Heart left ventricle (tissue), 16 donors: ENCODE measurements at regions of chr3 and their contacts with region 1.

Region 1: GRCh38 chr3:30779686-30780287 is 114.7 kb downstream of the GADL1 start:
- DNase-seq: no peak
- ATAC-seq: peak in 2 of 4 donors; percentile 36 to 41
- H3K4me3 ChIP-seq: no peak overlapping the region
- H3K27ac ChIP-seq: no peak overlapping the region
- H3K4me1 ChIP-seq: no peaks in the 10 kb centered on the region
- H3K27me3 ChIP-seq: no peaks in the 10 kb centered on the region
- CTCF ChIP-seq: peak in 11 of 12 donors; percentile 11 to 53 (median 28)
- POLR2A ChIP-seq: no peak

Region 2: DNA sequence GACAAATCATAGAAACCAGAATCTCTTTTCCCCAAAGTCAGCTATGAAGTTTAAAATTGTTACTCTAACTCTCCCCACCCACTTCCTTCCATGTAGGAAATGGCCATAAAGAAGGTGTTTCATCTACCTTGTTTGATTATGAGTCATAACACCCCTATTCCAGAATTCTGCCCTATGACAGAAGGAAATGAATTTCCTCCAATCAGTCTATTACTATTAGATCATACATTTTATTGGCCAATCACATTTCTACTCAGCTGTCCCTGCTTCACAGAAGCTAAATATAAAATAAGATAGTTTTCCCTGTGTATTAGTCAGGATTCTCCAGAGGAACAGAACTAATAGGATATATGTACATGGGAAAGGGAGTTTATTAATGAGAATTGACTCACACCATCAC is 71.3 kb before region 1 on chr3:
- intact Hi-C with region 1: no loop called
- DNase-seq: no peak
- ATAC-seq: peak in 1 of 4 donors; percentile 28
- H3K4me3 ChIP-seq: no peak overlapping the region
- H3K27ac ChIP-seq: no peak overlapping the region
- H3K4me1 ChIP-seq: peaks cover 0 to 24% (median 0%) of the 10 kb centered on the region in 12 donors
- H3K27me3 ChIP-seq: no peaks in the 10 kb centered on the region
- CTCF ChIP-seq: no peak
- POLR2A ChIP-seq: no peak

Region 3: DNA sequence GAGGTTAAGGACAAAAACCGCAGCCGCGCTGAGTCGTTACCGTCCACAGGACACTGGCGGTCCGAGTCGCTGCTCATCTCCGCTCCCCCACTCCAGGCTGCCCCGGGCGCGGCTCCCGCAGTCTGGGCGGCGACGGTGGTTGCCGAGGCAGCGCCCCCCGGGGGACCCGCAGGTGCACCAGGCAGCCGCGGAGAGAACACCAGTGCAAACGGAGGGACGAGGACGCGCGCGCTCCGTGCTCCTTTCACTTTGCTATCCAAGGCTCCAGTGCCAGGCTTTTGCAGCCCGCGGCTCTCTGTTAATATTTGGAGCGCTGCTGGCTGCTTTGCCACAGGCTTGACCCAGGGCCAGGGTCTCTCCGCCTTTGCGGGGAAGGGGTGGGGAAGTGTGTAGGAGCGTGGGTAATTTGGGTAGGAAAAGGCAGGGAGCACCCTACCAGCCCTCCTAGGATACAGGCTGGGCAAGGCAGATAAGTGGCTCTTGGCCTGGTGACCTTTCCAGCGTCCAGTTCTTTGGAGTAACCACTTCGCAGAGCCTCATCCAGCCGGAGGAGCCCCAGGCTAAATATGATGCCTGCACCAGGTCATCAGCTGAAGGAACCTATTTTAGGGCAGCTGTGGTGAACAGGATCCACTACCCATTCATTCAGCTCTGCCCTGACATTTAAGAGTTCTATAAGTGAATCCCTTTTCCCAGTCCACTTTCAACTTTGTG is 114.9 kb after region 1 on chr3 and contains the start of gene GADL1:
- intact Hi-C with region 1: loop called in 2 of 10 experiments (anchors 10 kb)
- DNase-seq: peak; percentile 20 to 55 (median 33)
- ATAC-seq: peak in 3 of 4 donors; percentile 67 to 83 (median 82)
- H3K4me3 ChIP-seq: peak within 1 kb of the TSS; percentile 7 to 72 (median 58)
- H3K27ac ChIP-seq: peak within 1 kb of the TSS in 1 of 12 donors; percentile 42
- H3K4me1 ChIP-seq: peaks cover 0 to 8% (median 0%) of the 10 kb centered on the region in 12 donors
- H3K27me3 ChIP-seq: peaks cover 0 to 25% (median 0%) of the 10 kb centered on the region in 9 donors
- CTCF ChIP-seq: peak in 1 of 12 donors; percentile 24
- POLR2A ChIP-seq: no peak
- total RNA-seq, gene GADL1: 0.08 to 0.59 (median 0.22) TPM in 6 of 9 donors, not detected in the others

Region 4: DNA sequence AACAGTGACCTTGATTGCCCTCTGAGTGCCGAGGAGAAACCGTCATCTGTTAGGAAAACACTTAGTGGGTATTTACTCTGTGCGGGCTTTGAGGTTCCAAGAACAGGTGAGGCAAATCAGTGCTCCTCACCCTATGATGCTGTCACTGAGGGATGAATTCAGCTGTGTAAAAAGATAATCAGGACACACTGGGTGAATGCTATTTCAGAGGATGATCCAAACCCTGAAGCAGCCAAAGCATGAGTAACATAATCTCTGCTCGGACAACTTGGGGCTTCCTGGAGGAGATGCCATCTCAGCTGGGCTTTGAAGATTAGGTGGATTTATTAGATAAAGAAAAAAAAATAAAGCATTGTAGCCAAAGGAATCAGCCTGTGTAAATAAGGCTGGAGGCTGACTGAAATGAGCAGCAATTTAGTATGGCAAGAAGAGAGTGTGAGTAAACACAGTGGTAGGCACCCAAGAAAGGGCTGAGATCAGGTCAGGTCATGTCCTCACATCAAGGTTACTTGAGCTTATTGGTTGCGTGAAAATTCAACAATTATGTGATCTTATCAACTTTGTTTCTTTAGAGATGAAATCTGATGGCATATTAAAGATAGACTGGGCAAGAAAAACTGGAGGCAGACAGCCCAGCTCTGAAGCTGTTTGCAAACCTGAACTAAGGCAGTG is 125.3 kb after region 1 on chr3:
- intact Hi-C with region 1: no loop called
- DNase-seq: no peak
- ATAC-seq: no peak
- H3K4me3 ChIP-seq: no peak overlapping the region
- H3K27ac ChIP-seq: no peak overlapping the region
- H3K4me1 ChIP-seq: no peaks in the 10 kb centered on the region
- H3K27me3 ChIP-seq: no peaks in the 10 kb centered on the region
- CTCF ChIP-seq: no peak
- POLR2A ChIP-seq: no peak

Region 5: DNA sequence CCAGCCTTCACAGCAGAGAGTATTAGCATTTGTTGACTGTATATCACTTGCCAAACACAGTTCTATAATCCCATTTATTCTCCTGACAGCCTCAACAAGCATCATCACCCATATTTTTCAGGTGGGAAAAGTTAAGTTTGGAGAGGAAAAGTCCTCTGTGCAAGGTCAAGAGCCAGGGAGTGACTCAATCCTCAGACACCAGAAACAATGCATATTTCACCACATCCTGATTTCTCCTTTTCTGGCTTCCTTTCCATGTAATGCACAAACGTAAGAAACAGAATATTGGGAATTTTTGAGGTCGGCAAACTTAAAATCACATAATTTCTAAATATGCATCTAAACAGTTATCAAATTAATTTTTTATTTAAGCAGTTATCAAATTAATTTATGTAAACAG is 230.7 kb after region 1 on chr3:
- intact Hi-C with region 1: loop called in 4 of 10 experiments (anchors 5 to 10 kb)
- DNase-seq: no peak
- ATAC-seq: no peak
- H3K4me3 ChIP-seq: no peak overlapping the region
- H3K27ac ChIP-seq: no peak overlapping the region
- H3K4me1 ChIP-seq: peaks cover 0 to 10% (median 0%) of the 10 kb centered on the region in 12 donors
- H3K27me3 ChIP-seq: no peaks in the 10 kb centered on the region
- CTCF ChIP-seq: peak in 1 of 12 donors; percentile 3
- POLR2A ChIP-seq: no peak

Region 6: DNA sequence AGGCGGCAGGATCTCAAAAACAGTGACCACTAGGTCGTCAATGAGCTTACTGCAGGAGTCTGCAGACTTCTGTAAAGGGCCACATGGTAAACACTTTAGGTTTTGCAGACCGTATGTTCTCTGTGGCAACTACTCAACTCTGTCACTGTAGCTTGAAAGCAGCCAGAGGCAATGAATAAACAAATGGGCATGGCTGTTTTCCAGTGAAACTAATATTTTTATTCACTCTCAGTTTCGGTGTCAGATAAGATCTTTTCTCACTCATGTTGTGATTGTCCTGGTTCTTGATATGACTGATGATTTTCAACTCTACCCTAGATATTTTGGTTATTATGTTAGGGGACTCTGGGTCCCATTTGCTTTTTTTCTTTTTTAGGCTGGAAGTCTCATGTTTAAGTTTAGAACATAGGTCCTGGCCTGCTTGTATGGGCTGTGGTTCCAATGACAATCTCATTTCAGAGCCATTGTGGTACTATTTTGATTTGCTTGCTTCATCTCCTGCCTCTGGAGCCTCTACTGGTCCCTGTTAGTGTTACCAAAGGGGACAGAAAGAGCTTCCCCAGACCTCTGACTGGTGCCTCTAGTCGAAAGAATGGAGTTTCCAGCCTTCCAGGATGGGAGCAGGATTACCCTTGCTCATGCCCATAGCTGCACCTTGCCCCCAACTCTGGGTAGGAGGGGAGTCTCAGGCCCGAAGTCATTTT is 974.9 kb after region 1 on chr3:
- intact Hi-C with region 1: loop called in 1 of 10 experiments (anchors 10 kb)
- DNase-seq: no peak
- ATAC-seq: no peak
- H3K4me3 ChIP-seq: no peak overlapping the region
- H3K27ac ChIP-seq: no peak overlapping the region
- H3K4me1 ChIP-seq: peaks cover 0 to 13% (median 0%) of the 10 kb centered on the region in 12 donors
- H3K27me3 ChIP-seq: no peaks in the 10 kb centered on the region
- CTCF ChIP-seq: no peak
- POLR2A ChIP-seq: no peak

Region 7: GRCh38 chr3:31777092-31777491 is 997.3 kb after region 1 on chr3:
- intact Hi-C with region 1: loop called in 1 of 10 experiments (anchors 10 kb)
- DNase-seq: no peak
- ATAC-seq: no peak
- H3K4me3 ChIP-seq: no peak overlapping the region
- H3K27ac ChIP-seq: no peak overlapping the region
- H3K4me1 ChIP-seq: no peaks in the 10 kb centered on the region
- H3K27me3 ChIP-seq: no peaks in the 10 kb centered on the region
- CTCF ChIP-seq: no peak
- POLR2A ChIP-seq: no peak